Sigmoid colon (tissue), 7 donors: ENCODE measurements at regions of chr22 and their contacts with region 1.

Region 1: GRCh38 chr22:25447686-25448434 is 116.6 kb upstream of the GRK3 start:
- DNase-seq: peak; percentile 92
- H3K4me3 ChIP-seq: peak overlapping the region; percentile 50 to 82 (median 66)
- H3K27ac ChIP-seq: peak overlapping the region; percentile 72 to 83 (median 82)
- H3K4me1 ChIP-seq: peaks cover 0 to 31% (median 19%) of the 10 kb centered on the region in 4 donors
- H3K27me3 ChIP-seq: no peaks in the 10 kb centered on the region
- CTCF ChIP-seq: peak; percentile 85 to 94 (median 88)
- EP300 ChIP-seq: no peak
- POLR2A ChIP-seq: no peak

Region 2: DNA sequence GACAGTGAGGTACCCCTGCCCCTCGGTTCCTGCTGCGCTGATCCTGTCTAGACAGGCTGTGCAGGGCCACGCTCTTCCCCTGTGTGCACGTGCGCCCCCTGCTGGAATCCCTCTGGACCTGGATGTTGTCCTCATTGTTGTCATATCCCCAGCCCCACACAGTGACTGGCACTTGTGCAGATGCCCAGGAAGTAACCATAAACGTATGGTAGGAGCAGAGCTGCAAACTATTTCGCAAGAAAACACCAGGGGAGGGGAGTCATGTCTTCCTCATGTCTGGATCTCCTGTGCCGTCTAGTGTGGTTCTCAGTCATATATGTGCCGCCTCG is 113.7 kb before region 1 on chr22:
- intact Hi-C with region 1: no loop called
- DNase-seq: no peak
- H3K4me3 ChIP-seq: no peak overlapping the region
- H3K27ac ChIP-seq: no peak overlapping the region
- H3K4me1 ChIP-seq: no peaks in the 10 kb centered on the region
- H3K27me3 ChIP-seq: no peaks in the 10 kb centered on the region
- CTCF ChIP-seq: no peak
- EP300 ChIP-seq: no peak
- POLR2A ChIP-seq: no peak

Region 3: GRCh38 chr22:25346859-25347751 is 100.8 kb before region 1 on chr22:
- intact Hi-C with region 1: no loop called
- DNase-seq: peak; percentile 38
- H3K4me3 ChIP-seq: no peak overlapping the region
- H3K27ac ChIP-seq: no peak overlapping the region
- H3K4me1 ChIP-seq: no peaks in the 10 kb centered on the region
- H3K27me3 ChIP-seq: no peaks in the 10 kb centered on the region
- CTCF ChIP-seq: no peak
- EP300 ChIP-seq: no peak
- POLR2A ChIP-seq: no peak

Region 4: GRCh38 chr22:25362215-25362882 is 85.5 kb before region 1 on chr22:
- intact Hi-C with region 1: loop called (anchors 5 kb)
- DNase-seq: peak; percentile 77
- H3K4me3 ChIP-seq: no peak overlapping the region
- H3K27ac ChIP-seq: no peak overlapping the region
- H3K4me1 ChIP-seq: peaks cover 0 to 15% (median 4%) of the 10 kb centered on the region in 4 donors
- H3K27me3 ChIP-seq: no peaks in the 10 kb centered on the region
- CTCF ChIP-seq: peak; percentile 49 to 87 (median 81)
- EP300 ChIP-seq: no peak
- POLR2A ChIP-seq: no peak

Region 5: DNA sequence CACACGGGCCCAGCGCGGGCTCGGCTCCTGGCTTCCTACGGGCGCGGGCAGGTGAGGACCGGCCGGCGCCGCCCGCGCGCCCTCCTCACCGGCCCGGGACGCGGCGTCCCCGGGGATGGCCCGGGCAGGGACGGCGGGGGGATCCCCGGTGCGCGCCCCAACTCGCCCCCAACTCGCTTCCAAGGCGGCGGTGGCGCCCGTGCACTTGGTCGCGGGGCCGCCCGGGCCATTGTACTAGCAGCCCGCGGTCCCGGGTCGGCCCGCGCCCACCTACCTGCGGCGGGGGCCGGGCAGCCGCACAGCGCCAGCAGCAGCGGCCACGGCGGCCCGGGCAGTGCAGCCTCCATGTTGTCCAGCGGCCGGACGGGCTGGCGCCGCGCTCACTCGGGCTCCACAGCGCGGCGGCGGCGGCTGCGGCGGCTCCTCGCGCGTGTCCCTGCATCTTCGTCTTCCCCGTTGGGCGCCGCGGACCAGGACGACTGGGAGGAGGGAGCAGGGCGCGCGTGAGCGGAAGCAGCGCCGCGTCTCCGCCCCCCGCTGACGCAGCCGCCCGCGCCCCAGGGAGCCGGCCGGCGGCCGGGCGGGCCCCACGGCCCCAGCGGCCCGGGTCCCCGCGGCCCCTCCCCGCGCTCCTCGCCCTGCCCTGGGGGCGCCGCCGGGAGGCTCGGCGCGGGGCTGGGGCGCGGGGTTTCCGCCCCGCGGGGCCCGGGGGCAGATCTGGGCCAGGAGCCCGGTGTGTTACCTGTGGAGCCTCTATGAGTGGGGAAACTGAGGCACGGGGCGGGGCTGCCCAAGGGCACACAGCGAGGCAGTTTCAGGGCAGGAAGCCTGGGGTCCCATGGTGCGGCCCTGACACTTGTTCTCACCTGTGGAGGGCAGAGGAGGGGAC is 42.7 kb before region 1 on chr22:
- intact Hi-C with region 1: loop called (anchors 5 kb)
- DNase-seq: peak; percentile 88
- H3K4me3 ChIP-seq: peak overlapping the region; percentile 44 to 95 (median 88)
- H3K27ac ChIP-seq: peak overlapping the region; percentile 88 to 94 (median 92)
- H3K4me1 ChIP-seq: peaks cover 0 to 48% (median 46%) of the 10 kb centered on the region in 4 donors
- H3K27me3 ChIP-seq: no peaks in the 10 kb centered on the region
- CTCF ChIP-seq: no peak
- EP300 ChIP-seq: no peak
- POLR2A ChIP-seq: no peak

Region 6: GRCh38 chr22:25702040-25702439 is 254.2 kb after region 1 on chr22:
- intact Hi-C with region 1: loop called (anchors 5 kb)
- DNase-seq: no peak
- H3K4me3 ChIP-seq: no peak overlapping the region
- H3K27ac ChIP-seq: no peak overlapping the region
- H3K4me1 ChIP-seq: peaks cover 0 to 6% (median 1%) of the 10 kb centered on the region in 4 donors
- H3K27me3 ChIP-seq: no peaks in the 10 kb centered on the region
- CTCF ChIP-seq: peak in 3 of 4 experiments; percentile 8 to 42 (median 26)
- EP300 ChIP-seq: no peak
- POLR2A ChIP-seq: no peak